ENCODE measurements at regions of chr3 and their contacts with region 1.

Region 1: GRCh38 chr3:127959846-127960245 is 44.8 kb downstream of the KBTBD12 start:
- DNase-seq: peak; percentile 39
- CTCF ChIP-seq: peak; percentile 50

Region 2: DNA sequence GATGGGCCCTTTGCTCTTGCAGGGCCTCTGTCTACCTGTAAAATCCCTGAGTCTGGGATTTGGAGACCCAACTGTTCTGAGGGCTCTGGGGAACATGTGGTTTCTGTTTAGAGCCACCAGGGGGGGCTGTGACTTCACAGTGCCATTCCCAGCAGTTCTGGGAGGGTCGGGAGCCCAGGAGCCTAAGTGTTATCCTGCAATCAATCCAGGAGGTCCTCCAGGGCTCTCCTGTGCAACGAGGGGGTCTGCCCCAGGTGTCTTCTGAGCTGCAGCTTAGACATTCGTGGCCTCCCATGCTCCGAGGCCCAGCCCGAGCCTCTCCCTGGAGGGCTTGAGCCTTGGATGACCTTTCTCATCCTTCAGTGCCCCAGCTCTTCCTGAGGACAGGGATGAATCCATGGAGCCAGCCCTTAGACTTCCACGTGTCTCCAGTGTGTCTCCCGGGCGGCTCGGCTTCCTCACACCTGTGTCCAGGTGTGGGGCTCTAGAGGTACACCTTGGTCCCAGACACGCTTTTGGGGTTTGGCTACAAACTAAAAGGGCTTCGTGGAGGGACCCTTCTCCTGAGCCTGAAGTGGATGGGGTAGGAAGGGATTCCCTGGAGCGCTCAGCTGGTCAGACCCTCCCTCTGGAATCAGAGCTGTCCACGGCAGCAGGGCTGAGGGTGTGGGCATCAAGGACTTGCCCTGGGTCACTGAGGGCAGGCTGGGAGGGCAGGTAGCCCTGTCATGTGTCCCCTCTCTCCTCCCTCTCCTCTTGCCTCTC is 307.4 kb before region 1 on chr3:
- CTCF ChIA-PET with region 1: interaction called, 13 read pairs
- POLR2A ChIA-PET with region 1: no interaction called
- DNase-seq: peak; percentile 77
- CTCF ChIP-seq: peak; percentile 80

Region 3: GRCh38 chr3:127791211-127791946 is 168.5 kb before region 1 on chr3:
- CTCF ChIA-PET with region 1: interaction called, 21 read pairs
- POLR2A ChIA-PET with region 1: no interaction called
- DNase-seq: peak; percentile 81
- CTCF ChIP-seq: peak; percentile 67

Region 4: GRCh38 chr3:127949446-127950055 is 10.3 kb before region 1 on chr3:
- CTCF ChIA-PET with region 1: interaction called, 22 read pairs
- POLR2A ChIA-PET with region 1: no interaction called
- DNase-seq: no peak
- CTCF ChIP-seq: no peak

Region 5: DNA sequence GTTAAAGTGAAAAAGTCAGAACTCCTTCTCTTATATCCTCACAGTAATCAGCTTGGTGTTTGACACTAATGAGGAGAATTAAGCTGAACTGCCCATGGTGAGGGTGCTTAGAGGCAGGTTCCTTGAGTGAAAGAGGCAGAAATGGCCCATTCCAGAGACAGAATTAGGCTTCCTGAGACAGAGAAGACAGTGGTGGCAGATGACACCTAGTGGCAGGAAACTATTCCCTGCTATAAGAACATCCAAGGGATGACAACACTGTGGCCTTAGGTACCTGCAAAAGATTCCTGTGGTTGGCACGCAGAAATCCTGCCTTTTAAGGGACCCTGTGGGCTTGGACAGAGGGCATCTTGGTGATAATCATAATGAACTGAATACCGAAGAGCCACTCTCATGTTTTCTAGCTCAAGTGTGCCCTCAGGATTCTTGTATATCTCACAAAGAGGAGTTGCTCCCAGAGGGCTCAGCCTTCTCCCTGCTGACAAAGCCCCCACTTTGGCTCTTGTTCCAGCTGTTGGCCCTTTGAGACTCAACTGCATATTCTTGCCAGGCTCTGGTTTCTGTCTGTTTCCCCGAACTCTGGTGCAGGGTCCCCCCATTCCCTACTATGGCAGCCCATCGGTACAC is 11.2 kb after region 1 on chr3:
- CTCF ChIA-PET with region 1: interaction called, 49 read pairs
- POLR2A ChIA-PET with region 1: no interaction called
- DNase-seq: peak; percentile 56
- CTCF ChIP-seq: peak; percentile 74

Measured in GM10248 (cell line).